AG04449 (cell line): ENCODE measurements at regions of chr14 and their contacts with region 1.

Region 1: DNA sequence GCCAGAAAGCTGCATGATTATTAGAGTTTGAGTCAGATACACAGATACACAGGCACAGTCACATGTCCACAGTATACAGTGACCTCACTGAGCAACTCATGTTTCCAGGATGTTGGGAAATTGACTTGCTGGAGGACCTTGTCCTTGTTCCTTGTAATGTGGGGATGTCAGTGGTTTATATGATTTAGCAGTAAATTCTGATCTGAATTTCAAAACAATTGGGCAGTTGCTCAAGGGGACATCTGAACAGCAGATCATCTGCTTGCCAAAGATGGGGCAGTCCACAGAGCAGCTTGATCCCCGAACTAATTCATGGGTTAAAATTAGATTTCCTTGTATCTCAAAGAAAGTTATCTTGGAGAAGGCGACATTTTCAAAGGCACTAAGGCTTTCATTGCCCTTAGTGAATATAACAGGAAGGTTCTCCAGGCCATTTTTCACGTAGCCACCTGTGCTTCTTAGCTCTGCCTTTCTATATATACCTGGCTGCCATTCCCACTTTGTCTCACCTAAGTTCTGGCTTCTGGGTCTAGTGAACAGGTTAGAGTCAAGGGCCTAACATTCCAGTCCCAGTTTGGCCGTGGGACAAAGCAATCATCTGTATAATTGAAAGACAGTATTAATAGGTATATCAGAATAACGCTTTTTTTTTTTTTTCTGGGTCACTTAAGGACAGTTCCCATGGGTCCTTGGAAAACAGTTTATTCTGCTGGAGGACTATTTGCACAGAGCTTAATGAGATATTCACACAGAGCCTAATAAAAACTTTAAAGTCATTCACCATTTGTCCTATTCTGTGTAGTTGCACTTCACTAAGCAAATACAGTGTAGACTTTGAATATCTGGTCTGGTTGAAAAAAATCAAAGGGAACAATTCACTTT is 64.9 kb upstream of the STRN3 start:
- DNase-seq: peak; percentile 63
- H3K4me3 ChIP-seq: no peak overlapping the region
- CTCF ChIP-seq: no peak

Region 2: DNA sequence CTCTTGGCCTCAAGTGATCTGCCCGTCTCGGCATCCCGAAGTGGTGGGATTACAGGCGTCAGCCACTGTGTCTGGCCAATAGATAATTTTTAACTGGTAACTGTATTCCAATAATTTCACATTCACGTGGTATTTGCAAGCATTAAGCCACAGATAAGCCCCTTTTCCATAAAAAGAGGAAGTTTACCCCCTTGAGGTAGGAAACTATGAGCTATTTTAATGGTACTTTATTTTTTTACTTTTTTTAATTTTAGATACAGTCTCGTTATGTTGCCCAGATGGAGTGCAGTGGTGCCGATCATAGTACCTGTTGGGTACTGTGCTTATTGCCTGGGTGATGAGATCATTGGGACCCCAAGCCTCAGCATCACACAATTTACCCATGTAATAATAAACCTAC is 108.6 kb before region 1 on chr14:
- CTCF ChIA-PET with region 1: interaction called, 77 read pairs
- POLR2A ChIA-PET with region 1: no interaction called
- DNase-seq: no peak
- H3K4me3 ChIP-seq: no peak overlapping the region
- CTCF ChIP-seq: no peak

Region 3: GRCh38 chr14:31000629-31001338 is 90.3 kb before region 1 on chr14:
- CTCF ChIA-PET with region 1: no interaction called
- POLR2A ChIA-PET with region 1: no interaction called
- DNase-seq: no peak
- H3K4me3 ChIP-seq: no peak overlapping the region
- CTCF ChIP-seq: no peak